Endothelial cell of umbilical vein (primary cell): ENCODE measurements at regions of chrX and their contacts with region 1.

Region 1: DNA sequence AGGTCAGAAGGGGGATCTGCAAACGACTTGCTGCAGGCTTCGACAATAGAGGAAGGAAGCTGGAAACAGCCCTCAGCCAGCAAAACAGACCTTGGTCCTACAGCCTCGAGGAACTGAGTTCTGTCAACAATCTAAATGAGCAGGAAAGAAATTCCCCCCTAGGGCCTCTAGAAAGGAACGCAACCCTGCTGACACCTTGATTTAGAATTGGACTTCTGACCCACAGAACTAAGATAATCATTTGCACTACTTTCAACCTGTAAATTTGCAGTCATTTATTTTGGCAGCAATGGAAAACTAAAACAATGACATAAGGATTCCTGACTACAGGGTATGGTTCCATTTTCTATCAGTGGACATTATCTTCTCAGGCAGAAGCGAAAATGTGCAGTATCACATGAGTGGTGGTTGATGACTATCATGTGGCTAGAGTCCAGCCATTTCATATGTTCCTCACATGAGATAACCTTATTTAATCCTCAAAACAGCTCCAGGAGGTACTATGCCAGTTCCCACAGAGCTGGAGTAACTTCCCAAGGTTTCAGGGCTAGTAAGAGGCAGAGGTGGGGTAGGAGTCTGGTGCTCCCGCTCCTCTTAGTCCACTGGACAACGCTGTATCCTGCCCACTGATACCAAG is 61.6 kb downstream of the SAT1 start:
- DNase-seq: peak; percentile 83
- H3K4me3 ChIP-seq: no peak overlapping the region
- H3K27ac ChIP-seq: peak overlapping the region; percentile 57
- H3K4me1 ChIP-seq: peaks cover 12% of the 10 kb centered on the region
- H3K27me3 ChIP-seq: no peaks in the 10 kb centered on the region
- CTCF ChIP-seq: no peak
- POLR2A ChIP-seq: no peak

Region 2: DNA sequence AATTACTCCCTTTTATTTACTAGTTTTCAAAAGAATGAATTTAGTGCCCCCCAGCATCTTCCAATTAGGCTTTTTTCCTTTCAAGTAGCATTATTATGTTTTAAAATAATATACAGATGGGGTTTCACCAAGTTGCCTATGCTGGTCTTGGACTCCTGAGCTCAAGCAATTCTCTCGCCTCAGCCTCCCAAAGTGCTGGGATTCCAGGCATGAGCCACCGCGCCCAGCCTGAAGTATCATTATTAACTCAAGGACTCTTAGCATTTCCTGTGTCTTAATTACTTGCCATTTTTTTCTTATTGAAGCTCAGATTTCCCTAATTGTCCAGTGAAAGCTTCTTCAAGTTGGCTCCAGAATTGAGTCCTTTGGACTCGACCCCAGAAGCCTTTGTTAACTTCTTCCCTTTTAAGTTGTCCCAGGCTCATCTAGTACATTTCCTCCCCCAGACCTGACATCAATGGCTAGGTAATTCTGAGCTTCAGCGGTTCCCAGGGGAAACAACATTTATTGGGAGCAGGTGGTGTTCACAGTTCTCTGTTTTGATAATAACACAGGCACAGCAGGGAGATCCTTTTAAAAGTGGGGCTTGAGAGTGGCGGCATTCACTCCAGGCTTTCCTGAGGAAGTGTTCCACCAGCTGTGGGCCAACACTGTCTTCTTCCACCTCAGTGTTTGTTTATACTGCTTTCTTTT is 51.6 kb before region 1 on chrX:
- CTCF ChIA-PET with region 1: no interaction called
- POLR2A ChIA-PET with region 1: no interaction called
- dilution Hi-C with region 1: no loop called
- intact Hi-C with region 1: no loop called
- DNase-seq: peak; percentile 52
- H3K4me3 ChIP-seq: no peak overlapping the region
- H3K27ac ChIP-seq: no peak overlapping the region
- H3K4me1 ChIP-seq: no peaks in the 10 kb centered on the region
- H3K27me3 ChIP-seq: no peaks in the 10 kb centered on the region
- CTCF ChIP-seq: no peak
- POLR2A ChIP-seq: no peak

Region 3: DNA sequence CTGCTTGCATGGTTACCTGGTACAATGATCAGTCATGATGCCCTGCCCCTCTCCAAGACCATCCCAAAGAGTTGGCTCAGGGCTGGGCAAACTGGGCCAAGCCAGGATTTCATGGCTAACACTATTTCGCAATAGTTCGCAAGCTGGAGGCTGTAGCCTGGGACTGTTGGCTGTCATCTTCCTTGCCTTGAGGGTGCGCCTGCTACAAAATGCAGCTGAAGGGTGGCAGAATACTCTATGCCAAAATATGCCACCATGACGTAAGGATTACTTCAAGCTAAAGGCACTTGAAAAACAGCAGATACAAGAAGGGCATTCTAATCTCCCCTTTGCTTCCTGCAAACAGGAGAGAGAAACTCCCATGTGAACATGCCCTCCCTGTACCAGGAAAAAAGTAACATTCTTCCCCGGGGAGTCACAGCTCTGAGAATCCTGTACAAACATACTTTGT is 40.7 kb before region 1 on chrX:
- CTCF ChIA-PET with region 1: no interaction called
- POLR2A ChIA-PET with region 1: no interaction called
- dilution Hi-C with region 1: no loop called
- intact Hi-C with region 1: loop called (anchors 5 kb)
- DNase-seq: peak; percentile 86
- H3K4me3 ChIP-seq: no peak overlapping the region
- H3K27ac ChIP-seq: peak overlapping the region; percentile 74
- H3K4me1 ChIP-seq: peaks cover 29% of the 10 kb centered on the region
- H3K27me3 ChIP-seq: no peaks in the 10 kb centered on the region
- CTCF ChIP-seq: no peak
- POLR2A ChIP-seq: no peak

Region 4: DNA sequence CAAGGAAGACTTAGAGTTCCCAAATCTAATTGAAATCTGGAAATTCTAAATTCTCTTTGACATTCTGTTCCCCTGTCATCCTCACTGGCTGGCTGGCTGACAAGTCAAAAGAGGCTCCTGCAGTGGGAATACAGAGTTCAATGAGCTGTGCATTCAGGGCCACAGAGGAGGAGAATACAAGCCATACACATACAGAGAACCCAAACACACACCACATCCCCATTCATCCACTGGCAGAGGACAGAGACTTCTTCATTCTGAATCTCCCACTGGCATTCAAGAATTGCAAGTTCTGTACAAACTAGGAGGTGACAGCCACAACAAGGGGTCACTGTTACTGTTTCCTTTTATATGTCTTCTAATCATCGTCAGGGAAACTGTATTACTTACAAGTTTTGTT is 11.9 kb before region 1 on chrX:
- CTCF ChIA-PET with region 1: no interaction called
- POLR2A ChIA-PET with region 1: no interaction called
- dilution Hi-C with region 1: no loop called
- intact Hi-C with region 1: no loop called
- DNase-seq: no peak
- H3K4me3 ChIP-seq: no peak overlapping the region
- H3K27ac ChIP-seq: no peak overlapping the region
- H3K4me1 ChIP-seq: no peaks in the 10 kb centered on the region
- H3K27me3 ChIP-seq: no peaks in the 10 kb centered on the region
- CTCF ChIP-seq: no peak
- POLR2A ChIP-seq: no peak

Region 5: GRCh38 chrX:23871905-23872546 is 27.4 kb after region 1 on chrX:
- CTCF ChIA-PET with region 1: interaction called, 3 read pairs
- POLR2A ChIA-PET with region 1: no interaction called
- dilution Hi-C with region 1: no loop called
- intact Hi-C with region 1: loop called (anchors 2 kb)
- DNase-seq: no peak
- H3K4me3 ChIP-seq: no peak overlapping the region
- H3K27ac ChIP-seq: no peak overlapping the region
- H3K4me1 ChIP-seq: peaks cover 3% of the 10 kb centered on the region
- H3K27me3 ChIP-seq: no peaks in the 10 kb centered on the region
- CTCF ChIP-seq: no peak
- POLR2A ChIP-seq: no peak

Region 6: DNA sequence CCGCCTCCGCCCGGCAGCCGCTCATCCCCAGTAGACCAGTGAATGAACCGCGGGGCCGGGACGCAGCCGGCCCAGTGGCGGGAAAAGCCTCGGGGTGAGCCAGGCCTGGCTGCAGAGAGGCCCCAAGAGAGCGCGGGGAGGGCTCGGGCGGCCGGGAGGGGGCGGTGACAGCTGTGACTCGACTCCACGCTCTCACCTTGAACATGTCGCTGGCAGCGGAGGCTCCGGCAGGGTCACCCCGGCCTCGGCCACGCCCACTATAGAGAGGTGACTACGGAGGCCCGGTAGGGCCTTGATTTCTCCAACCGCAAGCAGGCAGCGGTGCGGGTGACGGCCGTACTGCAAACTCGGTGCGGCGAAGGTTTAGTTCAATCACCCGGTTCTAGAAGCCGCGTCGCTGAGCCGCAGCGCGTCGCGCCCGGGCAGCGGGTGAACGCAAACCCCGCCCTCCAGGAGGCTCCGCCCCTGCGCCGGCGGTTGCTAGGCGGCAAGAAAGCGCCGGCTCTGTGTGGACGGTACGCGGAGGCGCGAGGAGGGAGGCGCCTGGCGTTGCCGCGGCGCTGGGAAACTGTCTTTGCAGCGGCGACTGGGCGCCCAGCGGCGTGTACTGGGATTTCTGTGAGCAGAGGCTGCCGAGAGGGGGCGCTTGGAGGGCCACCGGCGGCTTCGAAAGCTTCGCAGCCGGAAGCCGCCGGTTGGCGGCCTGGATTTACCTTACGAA is 63.0 kb after region 1 on chrX and contains the starts of genes APOO and CXorf58:
- CTCF ChIA-PET with region 1: no interaction called
- POLR2A ChIA-PET with region 1: no interaction called
- dilution Hi-C with region 1: no loop called
- intact Hi-C with region 1: no loop called
- DNase-seq: peak; percentile 91
- H3K4me3 ChIP-seq: peak within 1 kb of the TSS; percentile 51 to 82 (median 72)
- H3K27ac ChIP-seq: peak within 1 kb of the TSS; percentile 68
- H3K4me1 ChIP-seq: peaks cover 5% of the 10 kb centered on the region
- H3K27me3 ChIP-seq: no peaks in the 10 kb centered on the region
- CTCF ChIP-seq: peak; percentile 71 to 83
- POLR2A ChIP-seq: peak; percentile 39
- total RNA-seq, gene APOO: 20.9 and 24.3 TPM in 2 replicates
- total RNA-seq, gene CXorf58: not detected in 2 replicates